ENCODE measurements at regions of chr15 and their contacts with region 1.

Region 1: DNA sequence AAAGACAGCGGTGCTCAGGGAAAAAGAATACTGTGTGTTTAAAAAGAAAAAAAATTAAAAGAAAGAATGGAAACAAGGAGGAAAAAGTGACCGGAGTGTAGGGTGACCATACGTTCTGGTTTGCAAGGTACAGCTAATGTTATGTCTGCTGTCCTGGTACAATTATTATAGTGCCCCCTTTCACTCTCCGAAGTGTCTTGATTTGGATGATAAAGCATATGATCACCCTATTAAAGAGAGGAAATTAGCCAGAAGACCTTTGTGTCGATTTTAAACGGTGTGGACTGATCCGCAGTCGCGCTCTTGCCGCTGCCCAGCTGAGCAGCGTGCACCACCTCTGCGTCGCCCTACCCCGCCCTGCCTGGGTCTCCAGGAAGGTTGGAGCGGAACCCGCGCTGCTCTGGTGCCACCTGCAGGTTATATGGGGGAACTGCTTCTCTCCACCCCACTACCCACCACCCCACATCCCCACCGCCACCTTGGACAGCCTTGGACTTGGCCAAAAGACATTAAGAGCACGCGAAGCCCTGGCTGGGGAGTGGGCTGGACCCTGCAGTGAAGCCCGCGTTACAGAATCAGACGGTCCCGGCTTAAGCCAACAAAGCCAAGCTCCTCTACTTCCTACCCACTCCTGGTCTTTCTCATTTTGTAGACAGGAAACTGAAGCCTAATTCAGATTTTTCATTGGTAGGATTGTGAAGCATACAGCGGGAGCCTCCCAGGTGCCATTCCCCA is 41.2 kb upstream of the UBE2Q2 start:
- DNase-seq: peak; percentile 64
- ATAC-seq: peak; percentile 100
- H3K4me3 ChIP-seq: peak overlapping the region; percentile 22 to 48
- H3K27ac ChIP-seq: no peak overlapping the region
- H3K4me1 ChIP-seq: peaks cover 3 to 11% of the 10 kb centered on the region in 2 experiments; a peak in 2 of 4 replicates
- H3K27me3 ChIP-seq: no peaks in the 10 kb centered on the region; the same call in 1 of the 2 replicates
- CTCF ChIP-seq: peak; percentile 73 to 76 (median 75); a peak in 5 of 6 replicates
- POLR2A ChIP-seq: no peak
- RAD21 ChIP-seq: peak; percentile 90

Region 2: GRCh38 chr15:75684642-75685041 is 117.4 kb before region 1 on chr15:
- CTCF ChIA-PET with region 1: interaction called, 20 read pairs
- POLR2A ChIA-PET with region 1: no interaction called
- RAD21 ChIA-PET with region 1: interaction called, 7 to 8 read pairs
- intact Hi-C with region 1: loop called (anchors 1 kb)
- DNase-seq: no peak
- ATAC-seq: no peak
- H3K4me3 ChIP-seq: no peak overlapping the region
- H3K27ac ChIP-seq: no peak overlapping the region
- H3K4me1 ChIP-seq: no peaks in the 10 kb centered on the region; a peak in 1 of 4 replicates
- H3K27me3 ChIP-seq: no peaks in the 10 kb centered on the region
- CTCF ChIP-seq: no peak
- POLR2A ChIP-seq: no peak
- RAD21 ChIP-seq: peak; percentile 20; the same call in 1 of the 2 replicates

Region 3: DNA sequence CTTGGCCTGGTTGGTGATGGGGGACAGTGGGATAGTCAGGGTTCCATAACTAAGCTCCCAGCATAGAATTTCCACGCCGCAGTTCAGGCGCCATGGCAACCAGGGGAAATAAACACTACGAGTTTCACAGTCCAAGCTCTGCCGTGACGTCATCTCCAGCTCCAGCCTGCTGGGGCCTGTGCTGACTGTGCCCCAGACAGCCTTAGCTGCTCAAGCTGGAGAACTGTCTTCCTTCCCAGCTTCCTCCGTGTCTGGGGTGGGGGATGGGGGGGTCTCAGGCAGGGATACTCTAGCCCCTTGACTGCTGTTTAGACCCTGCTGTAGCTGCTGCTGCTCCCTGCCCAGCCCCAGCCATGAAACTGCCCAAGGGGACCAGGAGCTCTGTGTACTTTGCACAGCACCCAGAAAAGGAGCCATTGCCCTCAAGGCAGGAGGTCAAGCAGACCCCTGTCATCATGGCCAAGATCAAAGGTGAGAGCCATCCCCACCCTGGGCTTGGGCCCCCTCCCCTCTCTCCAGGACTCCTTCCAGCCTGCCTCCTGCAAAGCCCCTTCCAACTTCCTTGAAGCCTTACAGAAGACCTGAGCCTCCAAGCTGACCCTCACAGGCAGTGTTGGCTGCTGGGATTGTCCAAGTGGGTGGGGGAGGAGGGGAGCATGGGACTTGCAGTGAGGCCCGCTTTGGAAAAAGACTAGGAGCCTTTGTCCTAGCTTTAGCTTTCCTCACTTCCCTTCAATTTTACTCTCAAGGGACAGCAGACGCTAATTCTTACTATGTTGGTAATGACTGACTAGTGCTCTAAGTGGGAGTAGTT is 78.0 kb before region 1 on chr15:
- CTCF ChIA-PET with region 1: interaction called, 11 read pairs
- POLR2A ChIA-PET with region 1: no interaction called
- RAD21 ChIA-PET with region 1: no interaction called
- intact Hi-C with region 1: loop called (anchors 1 kb)
- DNase-seq: no peak
- ATAC-seq: no peak
- H3K4me3 ChIP-seq: no peak overlapping the region
- H3K27ac ChIP-seq: no peak overlapping the region
- H3K4me1 ChIP-seq: peaks cover 11 to 29% of the 10 kb centered on the region in 2 experiments; a peak in 3 of 4 replicates
- H3K27me3 ChIP-seq: no peaks in the 10 kb centered on the region
- CTCF ChIP-seq: no peak
- POLR2A ChIP-seq: no peak
- RAD21 ChIP-seq: no peak